Mammary epithelial cell (primary cell): ENCODE measurements at regions of chr13 and their contacts with region 1.

Region 1: GRCh38 chr13:102724923-102725322 is 30.1 kb upstream of the METTL21C start:
- DNase-seq: peak; percentile 93
- H3K4me3 ChIP-seq: no peak overlapping the region
- H3K27ac ChIP-seq: no peak overlapping the region
- H3K4me1 ChIP-seq: peaks cover 16% of the 10 kb centered on the region
- H3K27me3 ChIP-seq: no peaks in the 10 kb centered on the region
- CTCF ChIP-seq: peak; percentile 71 to 74

Region 2: GRCh38 chr13:102197193-102197592 is 527.7 kb before region 1 on chr13:
- CTCF ChIA-PET with region 1: no interaction called
- dilution Hi-C with region 1: no loop called
- in situ Hi-C with region 1: no loop called
- intact Hi-C with region 1: loop called (anchors 5 kb)
- DNase-seq: peak; percentile 30
- H3K4me3 ChIP-seq: no peak overlapping the region
- H3K27ac ChIP-seq: no peak overlapping the region
- H3K4me1 ChIP-seq: peaks cover 43% of the 10 kb centered on the region
- H3K27me3 ChIP-seq: no peaks in the 10 kb centered on the region
- CTCF ChIP-seq: peak; percentile 48 to 65

Region 3: DNA sequence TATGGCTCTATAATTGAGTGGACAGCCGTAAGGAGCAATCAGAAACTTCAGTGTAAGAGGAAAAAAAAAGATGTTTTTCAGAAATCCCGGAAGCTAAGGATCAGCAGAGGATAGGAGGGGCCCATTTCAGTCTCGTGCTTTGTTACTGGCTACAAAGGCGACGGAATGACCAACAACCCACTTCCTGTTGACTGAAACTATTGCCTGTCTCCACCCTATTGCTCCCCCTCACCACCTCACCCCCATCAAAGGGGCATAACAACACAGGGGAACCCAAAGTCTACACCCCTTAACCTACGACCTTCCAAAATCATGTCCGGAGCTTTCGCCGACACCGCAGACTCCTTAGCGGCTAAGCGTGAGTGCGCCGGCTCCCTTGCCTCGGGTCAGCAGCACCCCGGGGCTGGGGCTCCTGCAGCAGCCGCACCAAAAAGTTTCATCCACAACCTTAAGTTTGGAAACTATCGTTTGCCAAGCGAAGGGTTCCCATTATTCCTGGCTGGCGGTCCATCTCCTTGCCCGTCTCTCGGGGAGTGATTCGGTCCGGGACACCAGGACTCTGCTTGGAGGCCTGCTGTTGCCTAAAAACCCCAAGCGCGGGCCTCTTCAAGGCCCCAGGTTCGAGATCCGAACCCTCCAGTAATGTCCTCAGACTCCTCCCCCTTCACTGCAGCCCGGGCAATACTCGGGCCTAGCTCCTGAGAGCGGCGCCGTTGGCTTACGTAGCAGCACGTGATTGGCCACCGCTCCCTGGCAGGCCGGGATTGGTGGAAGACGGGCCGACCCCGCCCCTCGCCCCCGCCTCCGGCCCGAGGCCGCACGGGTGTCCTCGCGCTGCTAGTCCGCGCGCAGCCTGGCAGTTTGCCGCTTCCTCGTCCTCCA is 128.5 kb before region 1 on chr13 and contains the start of gene TPP2:
- CTCF ChIA-PET with region 1: interaction called, 3 read pairs
- dilution Hi-C with region 1: no loop called
- in situ Hi-C with region 1: loop called (anchors 5 to 10 kb)
- intact Hi-C with region 1: loop called (anchors 1 kb)
- DNase-seq: peak; percentile 98
- H3K4me3 ChIP-seq: peak within 1 kb of the TSS; percentile 81 to 97 (median 91)
- H3K27ac ChIP-seq: peak within 1 kb of the TSS; percentile 94
- H3K4me1 ChIP-seq: peaks cover 24% of the 10 kb centered on the region
- H3K27me3 ChIP-seq: no peaks in the 10 kb centered on the region
- CTCF ChIP-seq: no peak
- total RNA-seq, gene TPP2: 42.8 to 46.5 TPM

Region 4: GRCh38 chr13:102678339-102679107 is 46.4 kb before region 1 on chr13:
- CTCF ChIA-PET with region 1: no interaction called
- dilution Hi-C with region 1: no loop called
- in situ Hi-C with region 1: no loop called
- intact Hi-C with region 1: loop called (anchors 5 kb)
- DNase-seq: no peak
- H3K4me3 ChIP-seq: no peak overlapping the region
- H3K27ac ChIP-seq: no peak overlapping the region
- H3K4me1 ChIP-seq: no peaks in the 10 kb centered on the region
- H3K27me3 ChIP-seq: no peaks in the 10 kb centered on the region
- CTCF ChIP-seq: no peak

Region 5: DNA sequence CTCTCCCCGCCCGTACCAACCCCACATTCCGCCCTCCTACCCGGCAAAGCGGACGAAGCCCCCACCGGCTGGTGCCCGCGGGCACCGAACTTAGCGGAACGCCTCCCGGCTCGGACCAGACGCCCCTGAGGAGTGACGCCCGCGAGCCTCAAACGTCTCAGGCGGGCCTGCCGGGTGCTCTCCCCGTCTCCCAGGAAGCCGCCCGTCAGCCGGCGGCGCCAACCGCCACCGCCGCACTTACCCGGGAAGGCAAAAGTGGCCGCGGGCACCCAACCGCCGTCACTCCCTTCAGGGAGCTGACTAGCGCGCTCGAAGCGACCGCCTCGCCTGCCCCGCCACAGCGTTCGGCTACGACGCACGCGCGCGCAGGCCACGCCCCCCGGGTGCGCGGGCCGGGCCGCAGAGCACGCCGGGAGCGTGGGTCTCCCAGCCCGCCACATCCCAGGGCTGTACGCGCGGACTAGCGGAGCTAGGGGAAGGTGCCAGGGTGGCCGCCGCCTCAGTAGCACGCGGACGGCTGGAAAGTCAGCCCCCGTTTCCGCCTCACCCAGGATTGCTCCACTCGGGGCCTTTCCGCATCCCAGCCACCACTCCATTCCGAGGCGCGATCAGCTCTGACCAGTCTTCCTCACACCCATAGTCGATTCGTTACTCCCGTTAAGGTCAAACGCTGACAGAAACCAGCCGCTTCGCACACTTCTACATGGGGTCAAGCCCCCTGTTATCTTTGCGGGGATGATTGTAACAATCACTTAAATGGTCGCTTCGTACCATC is 48.7 kb after region 1 on chr13 and contains the start of gene TEX30:
- CTCF ChIA-PET with region 1: no interaction called
- dilution Hi-C with region 1: no loop called
- in situ Hi-C with region 1: no loop called
- intact Hi-C with region 1: loop called (anchors 1 kb)
- DNase-seq: peak; percentile 86
- H3K4me3 ChIP-seq: peak within 1 kb of the TSS; percentile 75 to 92 (median 83)
- H3K27ac ChIP-seq: peak within 1 kb of the TSS; percentile 54
- H3K4me1 ChIP-seq: peaks cover 6% of the 10 kb centered on the region
- H3K27me3 ChIP-seq: no peaks in the 10 kb centered on the region
- CTCF ChIP-seq: no peak
- total RNA-seq, gene TEX30: 10.5 to 14.2 TPM

Region 6: DNA sequence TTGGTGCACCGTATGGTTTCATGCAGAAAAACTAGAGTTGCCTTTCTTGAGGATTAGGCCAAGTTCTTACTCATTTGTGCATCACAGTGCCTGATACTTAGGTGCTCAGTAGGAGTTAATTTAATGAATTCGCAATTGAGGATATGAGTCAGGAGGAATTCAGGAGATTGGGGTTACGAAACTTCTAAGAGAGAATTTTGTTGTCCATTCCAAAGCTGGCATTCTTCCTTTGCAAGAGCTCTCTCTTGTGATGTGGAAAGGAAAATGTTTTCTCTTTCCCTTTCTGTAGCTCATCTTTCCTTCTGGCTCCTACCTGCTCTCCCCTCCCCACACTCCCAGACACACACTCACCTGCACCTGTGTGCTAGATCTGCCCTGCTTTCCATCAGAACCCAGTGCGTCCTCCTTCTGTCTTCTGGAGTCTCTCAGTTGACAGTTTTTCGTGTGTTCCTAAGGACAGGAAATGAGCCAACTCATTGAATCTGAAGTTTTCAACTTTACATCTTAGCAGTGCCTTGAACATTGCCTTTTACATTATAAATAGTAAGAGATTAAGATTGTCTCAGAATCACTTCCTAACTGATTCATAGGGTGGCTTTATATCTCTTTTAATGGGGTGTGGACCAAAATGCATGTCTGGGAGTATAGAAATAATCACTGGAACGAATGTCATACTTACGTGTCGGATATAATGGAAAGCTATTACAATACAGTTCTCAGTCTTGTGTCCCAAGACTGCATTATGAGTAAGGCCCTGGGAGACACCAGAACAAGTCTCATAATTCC is 101.2 kb after region 1 on chr13:
- CTCF ChIA-PET with region 1: interaction called, 5 read pairs
- dilution Hi-C with region 1: no loop called
- in situ Hi-C with region 1: no loop called
- intact Hi-C with region 1: loop called (anchors 1 kb)
- DNase-seq: peak; percentile 88
- H3K4me3 ChIP-seq: peak overlapping the region; percentile 21 to 46 (median 40)
- H3K27ac ChIP-seq: peak overlapping the region; percentile 59
- H3K4me1 ChIP-seq: peaks cover 20% of the 10 kb centered on the region
- H3K27me3 ChIP-seq: no peaks in the 10 kb centered on the region
- CTCF ChIP-seq: peak; percentile 3 to 28